Colonic mucosa (tissue), 4 donors: ENCODE measurements at regions of chr5 and their contacts with region 1.

Region 1: GRCh38 chr5:152532714-152533113 is 127.6 kb upstream of the NMUR2 start:
- DNase-seq: no peak
- H3K4me3 ChIP-seq: no peak overlapping the region
- H3K27ac ChIP-seq: no peak overlapping the region
- H3K4me1 ChIP-seq: no peaks in the 10 kb centered on the region
- H3K27me3 ChIP-seq: no peaks in the 10 kb centered on the region
- CTCF ChIP-seq: peak; percentile 35

Region 2: DNA sequence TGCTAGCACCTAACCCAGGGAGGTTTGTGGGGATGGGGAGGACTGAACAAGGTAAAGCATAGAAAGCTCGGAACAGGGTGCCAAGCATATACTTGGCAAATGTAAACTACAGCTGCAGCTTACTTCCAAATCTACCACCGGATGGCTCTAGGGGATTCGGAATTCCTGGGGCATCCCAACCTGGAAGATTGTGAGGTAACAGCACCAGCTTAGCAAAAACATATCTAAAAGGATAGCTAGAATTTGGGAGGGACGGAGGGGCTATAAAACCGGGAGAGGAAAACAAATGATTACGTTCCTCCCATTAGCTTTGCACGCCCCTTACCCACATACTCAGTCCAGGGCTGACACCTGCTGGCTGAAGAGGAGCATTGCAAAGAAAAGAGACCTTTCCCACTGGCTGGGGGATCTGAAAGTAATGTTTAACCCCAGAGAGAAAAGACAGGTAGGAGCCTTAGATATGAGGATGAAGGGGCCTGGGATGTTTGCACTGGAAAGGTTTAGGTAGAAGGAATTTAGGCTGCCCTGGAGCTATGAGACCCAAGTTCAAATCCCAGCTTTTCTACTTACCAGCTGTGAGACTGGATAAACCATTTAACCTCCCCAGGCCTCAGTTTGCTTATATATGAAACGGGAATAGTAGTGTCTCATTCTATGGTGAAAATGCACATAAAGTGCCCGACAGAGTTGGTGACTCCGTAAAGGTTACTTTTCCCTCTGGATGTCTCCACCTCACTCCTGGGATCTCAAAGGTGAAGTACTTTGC is 1432.3 kb after region 1 on chr5:
- intact Hi-C with region 1: loop called (anchors 2 kb)
- DNase-seq: peak; percentile 30
- H3K4me3 ChIP-seq: no peak overlapping the region
- H3K27ac ChIP-seq: no peak overlapping the region
- H3K4me1 ChIP-seq: no peaks in the 10 kb centered on the region
- H3K27me3 ChIP-seq: no peaks in the 10 kb centered on the region
- CTCF ChIP-seq: peak; percentile 61